ENCODE measurements at regions of chr6 and their contacts with region 1.

Region 1: GRCh38 chr6:52049252-52050050 is 38.0 kb downstream of the PKHD1 start:
- DNase-seq: peak; percentile 36
- H3K4me3 ChIP-seq: no peak overlapping the region
- H3K27ac ChIP-seq: no peak overlapping the region
- H3K4me1 ChIP-seq: no peaks in the 10 kb centered on the region
- H3K27me3 ChIP-seq: no peaks in the 10 kb centered on the region
- CTCF ChIP-seq: peak; percentile 84
- EP300 ChIP-seq: no peak
- RAD21 ChIP-seq: peak; percentile 83

Region 2: DNA sequence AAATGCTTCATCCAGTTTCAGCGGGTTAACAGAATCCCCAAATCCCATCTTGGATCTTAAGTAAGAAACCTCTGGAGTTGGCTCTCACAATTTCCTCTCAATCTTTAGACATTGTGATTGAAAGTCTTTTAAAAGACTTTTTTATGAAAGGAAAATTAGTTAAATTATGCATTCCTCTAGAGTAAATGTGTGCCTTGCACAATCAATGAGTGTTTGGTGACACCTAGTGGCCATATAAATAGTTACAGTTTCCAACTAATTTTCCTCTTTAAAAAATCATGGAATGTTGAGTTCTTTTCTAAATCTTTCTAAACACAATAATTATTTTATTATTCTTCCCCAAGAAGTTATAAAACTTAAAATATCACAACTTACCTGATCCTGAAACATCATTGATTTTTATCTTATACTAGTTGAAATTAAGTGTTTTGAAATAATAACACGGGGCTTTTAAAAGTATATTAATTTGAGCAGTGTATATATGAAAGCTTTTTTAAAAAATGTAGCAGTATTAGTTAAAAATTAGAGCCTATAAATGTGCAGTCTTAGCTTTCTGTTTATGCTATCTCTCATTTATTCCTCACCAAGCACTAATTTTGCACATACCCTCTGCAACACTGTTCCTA is 28.4 kb before region 1 on chr6:
- CTCF ChIA-PET with region 1: interaction called, 44 read pairs
- POLR2A ChIA-PET with region 1: no interaction called
- DNase-seq: peak; percentile 14
- H3K4me3 ChIP-seq: no peak overlapping the region; a peak in 1 of 4 replicates
- H3K27ac ChIP-seq: peak overlapping the region in 1 of 2 experiments; percentile 99; a peak in 2 of 4 replicates
- H3K4me1 ChIP-seq: peaks cover 0 to 31% of the 10 kb centered on the region in 2 experiments; a peak in 2 of 4 replicates
- H3K27me3 ChIP-seq: no peaks in the 10 kb centered on the region; the same call in 1 of the 2 replicates
- CTCF ChIP-seq: peak; percentile 87
- EP300 ChIP-seq: no peak
- RAD21 ChIP-seq: peak; percentile 91

Region 3: GRCh38 chr6:52027699-52028098 is 21.8 kb before region 1 on chr6:
- CTCF ChIA-PET with region 1: interaction called, 44 read pairs
- POLR2A ChIA-PET with region 1: no interaction called
- DNase-seq: no peak
- H3K4me3 ChIP-seq: no peak overlapping the region
- H3K27ac ChIP-seq: no peak overlapping the region
- H3K4me1 ChIP-seq: no peaks in the 10 kb centered on the region; a peak in 1 of 4 replicates
- H3K27me3 ChIP-seq: no peaks in the 10 kb centered on the region; the same call in 1 of the 2 replicates
- CTCF ChIP-seq: no peak
- EP300 ChIP-seq: no peak
- RAD21 ChIP-seq: no peak

Region 4: DNA sequence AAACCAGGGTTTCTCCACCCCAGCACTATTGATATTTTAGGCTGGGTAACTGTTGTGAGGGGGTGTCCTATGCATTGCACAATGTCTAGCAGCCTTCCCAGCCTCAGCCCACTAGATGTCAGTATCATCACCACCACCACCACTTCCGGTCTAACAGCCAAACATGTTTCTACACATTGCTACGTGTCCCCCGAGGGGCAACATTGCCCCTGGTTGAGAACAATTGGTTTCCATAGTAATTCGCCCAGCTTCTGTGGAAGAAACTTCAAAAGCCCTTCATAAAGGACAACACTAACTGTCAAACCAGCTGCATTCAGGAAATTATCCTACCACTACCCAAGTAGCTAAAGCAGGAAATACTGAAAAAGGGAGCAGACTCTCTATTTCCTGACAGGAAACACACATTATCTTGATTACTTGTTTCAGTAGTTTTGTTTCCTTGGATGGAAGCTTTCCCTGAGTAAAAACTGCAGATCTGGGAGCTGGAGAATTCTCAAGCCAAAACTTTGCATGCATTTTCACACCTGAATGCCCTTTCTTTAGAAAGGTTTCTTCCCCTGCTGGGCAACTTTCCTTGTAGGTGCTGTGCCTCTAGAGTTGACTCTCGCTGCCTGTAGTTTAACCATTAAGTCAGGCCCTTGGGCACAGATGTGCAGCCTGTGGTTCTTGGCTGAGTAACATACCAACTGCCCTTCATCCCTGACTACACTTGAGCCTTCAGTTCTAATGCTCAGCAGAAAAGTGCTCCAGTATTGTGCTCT is 14.3 kb after region 1 on chr6:
- CTCF ChIA-PET with region 1: interaction called, 21 read pairs
- POLR2A ChIA-PET with region 1: no interaction called
- DNase-seq: peak; percentile 51
- H3K4me3 ChIP-seq: no peak overlapping the region; a peak in 1 of 4 replicates
- H3K27ac ChIP-seq: no peak overlapping the region
- H3K4me1 ChIP-seq: no peaks in the 10 kb centered on the region; a peak in 2 of 4 replicates
- H3K27me3 ChIP-seq: no peaks in the 10 kb centered on the region
- CTCF ChIP-seq: peak; percentile 55
- EP300 ChIP-seq: no peak
- RAD21 ChIP-seq: peak; percentile 53

Region 5: GRCh38 chr6:52077180-52077884 is 27.9 kb after region 1 on chr6:
- CTCF ChIA-PET with region 1: interaction called, 10 read pairs
- POLR2A ChIA-PET with region 1: no interaction called
- DNase-seq: peak; percentile 3
- H3K4me3 ChIP-seq: no peak overlapping the region
- H3K27ac ChIP-seq: no peak overlapping the region
- H3K4me1 ChIP-seq: no peaks in the 10 kb centered on the region; a peak in 2 of 4 replicates
- H3K27me3 ChIP-seq: no peaks in the 10 kb centered on the region
- CTCF ChIP-seq: no peak
- EP300 ChIP-seq: no peak
- RAD21 ChIP-seq: no peak

Region 6: DNA sequence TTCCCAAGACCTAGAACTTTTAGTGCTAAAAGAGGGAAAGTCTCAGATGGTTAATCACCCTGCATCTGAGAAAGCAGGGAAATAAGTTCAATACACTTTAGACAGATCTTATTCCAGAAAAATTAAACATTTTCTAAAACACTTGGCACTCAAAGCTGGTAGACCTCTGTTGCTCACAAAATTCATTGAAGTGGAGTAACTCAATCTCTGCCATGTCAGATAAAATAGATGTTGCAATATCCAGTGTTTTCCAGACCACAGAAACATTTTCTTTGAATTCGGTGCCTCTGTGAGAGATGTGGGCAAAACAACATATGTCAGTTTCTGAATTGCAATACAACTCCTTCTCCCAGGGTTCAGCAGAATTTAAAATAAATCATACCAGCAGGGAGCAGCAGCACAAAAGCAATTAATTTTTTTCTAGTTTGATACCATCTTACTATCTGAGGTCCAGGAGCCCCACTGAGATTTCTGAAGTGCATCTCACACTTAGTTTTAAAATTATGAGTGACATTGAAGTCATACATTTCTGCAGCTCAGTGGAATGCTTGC is 49.3 kb after region 1 on chr6:
- CTCF ChIA-PET with region 1: no interaction called
- POLR2A ChIA-PET with region 1: no interaction called
- DNase-seq: peak; percentile 47
- H3K4me3 ChIP-seq: no peak overlapping the region
- H3K27ac ChIP-seq: no peak overlapping the region
- H3K4me1 ChIP-seq: no peaks in the 10 kb centered on the region; a peak in 1 of 4 replicates
- H3K27me3 ChIP-seq: no peaks in the 10 kb centered on the region; the same call in 1 of the 2 replicates
- CTCF ChIP-seq: peak; percentile 32
- EP300 ChIP-seq: no peak
- RAD21 ChIP-seq: peak; percentile 61

Region 7: GRCh38 chr6:52691718-52692117 is 642.3 kb after region 1 on chr6:
- CTCF ChIA-PET with region 1: no interaction called
- POLR2A ChIA-PET with region 1: no interaction called
- DNase-seq: no peak
- H3K4me3 ChIP-seq: no peak overlapping the region
- H3K27ac ChIP-seq: no peak overlapping the region
- H3K4me1 ChIP-seq: no peaks in the 10 kb centered on the region
- H3K27me3 ChIP-seq: no peaks in the 10 kb centered on the region
- CTCF ChIP-seq: no peak
- EP300 ChIP-seq: no peak
- RAD21 ChIP-seq: no peak